Mammary epithelial cell (primary cell): ENCODE measurements at regions of chr12 and their contacts with region 1.

Region 1: DNA sequence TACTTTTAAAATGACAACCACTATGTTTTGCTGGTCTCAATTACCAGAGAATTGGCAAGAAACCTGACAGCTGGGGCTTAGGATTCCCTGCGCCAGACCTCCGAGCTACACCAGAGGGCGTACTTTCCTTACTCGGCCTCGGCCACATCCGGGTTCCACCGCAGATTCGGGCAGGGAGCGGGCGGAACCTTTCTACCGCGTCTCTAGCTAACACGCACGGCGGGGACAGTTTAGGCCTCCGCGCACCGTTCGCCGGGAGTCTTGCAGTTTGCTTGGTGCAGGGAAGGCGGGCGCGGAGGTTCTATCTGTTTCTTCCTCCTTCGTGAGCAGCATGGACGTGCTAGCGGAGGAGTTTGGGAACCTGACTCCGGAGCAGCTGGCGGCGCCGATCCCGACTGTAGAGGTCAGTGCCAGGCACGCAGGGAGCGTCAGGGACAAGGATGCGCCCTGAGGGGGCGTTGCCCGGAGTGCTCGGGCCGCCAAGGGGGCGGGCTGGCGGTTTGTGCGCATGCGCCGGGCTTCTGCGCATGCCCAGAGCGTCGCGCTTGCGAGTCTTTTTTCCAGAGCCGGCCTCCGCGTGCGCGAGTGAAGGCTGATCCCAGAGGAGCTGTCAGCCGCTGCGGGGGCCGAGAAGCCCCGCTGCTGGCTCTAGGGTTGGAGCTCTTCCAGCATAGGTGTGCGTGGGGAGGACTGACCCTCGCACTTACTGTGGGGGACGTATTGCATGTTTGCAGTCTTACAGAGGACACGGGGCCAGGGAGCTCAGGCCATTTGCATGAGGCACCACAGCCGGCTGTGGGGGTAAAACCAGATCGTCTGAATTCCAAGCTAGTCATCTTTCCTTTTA is at the start of gene POLR3B:
- DNase-seq: peak; percentile 93
- H3K4me3 ChIP-seq: peak within 1 kb of the TSS; percentile 75 to 90 (median 81)
- H3K27ac ChIP-seq: peak within 1 kb of the TSS; percentile 69
- H3K4me1 ChIP-seq: peaks cover 10% of the 10 kb centered on the region
- H3K27me3 ChIP-seq: no peaks in the 10 kb centered on the region
- CTCF ChIP-seq: peak; percentile 81 to 92
- total RNA-seq, gene POLR3B: 13.3 TPM

Region 2: GRCh38 chr12:106170285-106170684 is 187.5 kb before region 1 on chr12:
- CTCF ChIA-PET with region 1: no interaction called
- dilution Hi-C with region 1: no loop called
- in situ Hi-C with region 1: no loop called
- intact Hi-C with region 1: no loop called
- DNase-seq: peak; percentile 79
- H3K4me3 ChIP-seq: no peak overlapping the region
- H3K27ac ChIP-seq: no peak overlapping the region
- H3K4me1 ChIP-seq: no peaks in the 10 kb centered on the region
- H3K27me3 ChIP-seq: peaks cover 1% of the 10 kb centered on the region
- CTCF ChIP-seq: no peak

Region 3: GRCh38 chr12:106345739-106346138 is 12.0 kb before region 1 on chr12:
- CTCF ChIA-PET with region 1: no interaction called
- dilution Hi-C with region 1: no loop called
- in situ Hi-C with region 1: no loop called
- intact Hi-C with region 1: no loop called
- DNase-seq: peak; percentile 96
- H3K4me3 ChIP-seq: no peak overlapping the region
- H3K27ac ChIP-seq: peak overlapping the region; percentile 2
- H3K4me1 ChIP-seq: peaks cover 13% of the 10 kb centered on the region
- H3K27me3 ChIP-seq: no peaks in the 10 kb centered on the region
- CTCF ChIP-seq: peak; percentile 59 to 68

Region 4: DNA sequence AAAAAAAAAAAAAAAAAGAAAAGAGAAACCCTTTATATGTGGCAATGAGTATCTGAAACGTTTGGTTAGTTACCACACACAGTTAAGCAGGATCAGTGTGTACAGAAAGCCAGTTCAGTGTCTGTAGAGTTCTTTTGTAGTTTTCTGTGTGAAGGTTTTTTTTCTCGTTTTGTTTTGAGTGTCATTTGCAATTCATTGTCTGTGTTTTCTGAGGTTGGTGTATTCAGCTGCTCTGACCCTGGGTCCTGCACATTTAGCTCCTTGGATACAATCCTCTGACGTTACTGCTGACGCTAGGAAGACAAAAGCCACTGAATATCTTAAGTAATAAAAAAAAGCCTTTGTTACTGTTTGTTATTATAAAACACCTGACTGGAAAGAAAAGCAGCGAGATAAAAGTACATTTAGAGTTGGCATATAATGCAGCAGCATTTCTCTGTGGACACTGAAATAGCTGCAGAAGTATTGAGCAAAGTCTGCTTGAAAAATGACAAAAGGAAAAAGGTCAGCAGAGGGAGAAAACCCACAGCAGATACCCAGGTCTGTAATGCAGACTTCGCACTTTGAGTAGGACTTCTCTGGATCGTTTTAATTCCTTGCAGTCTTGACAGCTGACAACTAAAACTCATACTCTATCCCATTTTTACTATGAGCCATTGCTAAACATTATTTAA is 88.8 kb after region 1 on chr12:
- CTCF ChIA-PET with region 1: no interaction called
- dilution Hi-C with region 1: no loop called
- in situ Hi-C with region 1: no loop called
- intact Hi-C with region 1: no loop called
- DNase-seq: no peak
- H3K4me3 ChIP-seq: no peak overlapping the region
- H3K27ac ChIP-seq: no peak overlapping the region
- H3K4me1 ChIP-seq: peaks cover 5% of the 10 kb centered on the region
- H3K27me3 ChIP-seq: no peaks in the 10 kb centered on the region
- CTCF ChIP-seq: no peak

Region 5: DNA sequence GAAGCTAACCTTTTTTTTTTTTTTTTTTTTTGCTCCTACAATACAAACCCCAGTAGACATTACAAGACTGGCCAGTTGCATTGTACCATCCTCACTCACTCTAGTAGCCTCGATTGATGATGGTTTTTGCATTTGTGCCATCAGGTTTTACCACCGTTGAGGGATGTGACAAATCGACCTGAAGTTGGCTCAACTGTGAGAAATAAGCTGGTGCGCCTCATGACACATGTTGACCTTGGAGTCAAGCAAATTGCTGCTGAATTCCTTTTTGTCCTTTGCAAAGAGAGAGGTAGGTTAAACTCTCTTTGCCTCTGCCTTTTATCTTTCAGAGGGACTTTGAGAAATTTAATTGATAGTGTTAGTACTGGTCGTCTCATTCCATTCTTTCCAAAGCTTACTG is 493.5 kb after region 1 on chr12:
- CTCF ChIA-PET with region 1: interaction called, 27 read pairs
- dilution Hi-C with region 1: no loop called
- in situ Hi-C with region 1: no loop called
- intact Hi-C with region 1: no loop called
- DNase-seq: no peak
- H3K4me3 ChIP-seq: no peak overlapping the region
- H3K27ac ChIP-seq: no peak overlapping the region
- H3K4me1 ChIP-seq: no peaks in the 10 kb centered on the region
- H3K27me3 ChIP-seq: no peaks in the 10 kb centered on the region
- CTCF ChIP-seq: no peak